ENCODE measurements at regions of chr6 and their contacts with region 1.

Region 1: GRCh38 chr6:10478187-10479040 is 42.7 kb upstream of the GCNT2 start:
- DNase-seq: no peak
- H3K4me3 ChIP-seq: no peak overlapping the region
- H3K27ac ChIP-seq: no peak overlapping the region
- H3K4me1 ChIP-seq: no peaks in the 10 kb centered on the region
- H3K27me3 ChIP-seq: no peaks in the 10 kb centered on the region
- CTCF ChIP-seq: peak; percentile 27 to 64 (median 52)

Region 2: GRCh38 chr6:9927283-9927682 is 551.1 kb before region 1 on chr6:
- intact Hi-C with region 1: no loop called
- DNase-seq: no peak
- H3K4me3 ChIP-seq: no peak overlapping the region
- H3K27ac ChIP-seq: no peak overlapping the region
- H3K4me1 ChIP-seq: no peaks in the 10 kb centered on the region
- H3K27me3 ChIP-seq: no peaks in the 10 kb centered on the region
- CTCF ChIP-seq: no peak

Region 3: DNA sequence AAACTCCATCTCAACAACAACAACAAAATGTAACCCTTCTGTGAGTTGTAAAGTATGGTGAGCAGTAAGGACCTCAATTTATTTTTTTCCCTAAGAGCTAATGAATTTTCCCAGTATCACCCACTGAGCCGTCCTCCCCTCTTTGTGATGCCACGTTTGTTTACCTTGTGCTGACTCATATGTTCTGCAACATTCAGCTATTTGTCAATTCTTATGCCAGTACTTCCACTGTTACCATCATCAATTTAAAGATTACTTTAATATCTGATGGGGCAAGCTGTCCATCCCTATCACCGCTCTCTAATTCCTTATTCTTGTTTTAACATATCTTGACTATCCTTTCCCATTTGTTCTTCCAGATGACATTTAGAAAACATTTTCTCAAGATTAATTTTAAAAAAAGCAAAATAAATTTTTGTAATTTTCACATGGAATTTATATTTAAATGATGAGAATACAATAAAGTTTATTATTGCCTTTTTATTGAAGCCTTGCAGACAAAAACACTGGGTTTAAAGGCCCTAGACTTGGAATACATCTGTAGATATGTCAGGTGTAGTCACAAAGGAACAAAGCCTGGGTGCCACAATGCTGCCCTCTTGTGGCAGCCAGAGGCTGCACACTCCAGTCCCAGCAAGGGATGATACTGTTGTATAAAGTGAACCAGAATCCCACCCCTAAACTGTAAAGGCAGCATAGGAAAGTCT is 322.6 kb after region 1 on chr6:
- intact Hi-C with region 1: loop called (anchors 1 kb)
- DNase-seq: peak in 1 of 2 donors; percentile 68
- H3K4me3 ChIP-seq: no peak overlapping the region
- H3K27ac ChIP-seq: no peak overlapping the region
- H3K4me1 ChIP-seq: no peaks in the 10 kb centered on the region
- H3K27me3 ChIP-seq: no peaks in the 10 kb centered on the region
- CTCF ChIP-seq: peak; percentile 75 to 98 (median 97)

Measured in ascending aorta (tissue), 2 donors.